HepG2 (cell line): ENCODE measurements at regions of chr2 and their contacts with region 1.

Region 1: DNA sequence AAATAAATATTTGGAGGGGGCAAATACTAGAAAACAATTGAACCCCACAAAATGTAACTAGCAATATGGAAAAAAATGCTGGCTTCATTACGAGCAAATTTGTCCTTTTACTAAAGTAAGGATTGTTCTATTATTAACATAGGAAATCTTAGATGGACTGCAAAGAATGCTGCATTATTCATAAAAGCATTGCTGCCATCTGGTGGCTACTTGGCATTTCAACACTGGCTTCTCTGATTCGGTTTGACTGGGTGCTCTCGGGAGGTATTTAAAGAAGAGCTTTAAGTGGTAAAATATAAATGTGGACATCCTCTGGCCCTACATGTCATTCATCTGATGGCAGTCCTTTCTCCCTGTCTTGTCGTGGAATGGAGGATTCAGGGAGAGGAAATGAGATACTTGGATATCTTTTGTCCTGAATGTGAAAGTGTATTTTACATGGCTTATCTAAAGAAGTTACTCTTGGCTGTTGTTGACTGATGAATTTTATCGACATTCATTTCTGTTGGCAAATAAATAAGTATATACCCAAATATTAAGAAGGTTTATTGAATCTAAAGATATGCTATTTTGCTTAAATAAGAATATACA is 130.2 kb downstream of the ARHGAP15 start:
- DNase-seq: peak; percentile 63
- ATAC-seq: peak; percentile 91
- H3K4me3 ChIP-seq: no peak overlapping the region
- H3K27ac ChIP-seq: no peak overlapping the region
- H3K4me1 ChIP-seq: no peaks in the 10 kb centered on the region
- H3K27me3 ChIP-seq: no peaks in the 10 kb centered on the region
- CTCF ChIP-seq: peak; percentile 78
- EP300 ChIP-seq: no peak
- POLR2A ChIP-seq: no peak
- RAD21 ChIP-seq: peak; percentile 40

Region 2: DNA sequence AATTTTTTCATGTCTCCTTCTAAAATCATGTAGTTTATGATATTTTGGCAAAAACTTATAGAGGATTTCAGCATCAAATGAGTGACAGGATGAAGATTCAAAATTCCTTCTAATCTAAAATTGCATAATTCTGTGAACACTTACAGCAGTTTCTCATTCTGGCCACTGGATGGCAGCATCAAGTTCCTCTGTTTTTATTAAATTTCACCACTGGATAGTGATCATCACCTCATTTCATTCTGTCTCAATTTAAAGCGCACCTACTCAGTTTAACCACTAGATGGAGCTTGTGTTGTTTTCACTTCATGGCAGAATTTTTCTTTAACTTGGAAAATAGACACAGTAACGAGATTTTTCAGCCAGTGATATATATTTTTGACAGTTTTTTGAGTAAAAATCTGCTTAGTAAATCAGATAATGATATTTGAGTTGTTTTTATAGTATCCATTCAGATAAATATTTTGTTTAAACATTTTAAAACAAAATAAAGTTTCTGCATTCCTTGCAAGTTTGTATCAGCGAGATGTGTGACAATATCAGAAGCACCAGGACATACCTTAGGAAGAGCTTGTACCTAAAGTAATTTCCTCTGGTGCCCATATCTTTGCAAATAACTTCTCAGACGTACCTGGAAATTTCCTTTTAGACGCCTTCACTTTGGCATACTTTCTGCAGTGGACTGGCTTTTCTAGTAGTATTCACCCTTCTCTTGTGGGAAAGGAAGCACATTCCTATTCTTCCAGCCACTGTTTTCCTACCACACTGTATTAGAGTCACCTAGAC is 225.0 kb before region 1 on chr2:
- CTCF ChIA-PET with region 1: interaction called, 8 read pairs
- POLR2A ChIA-PET with region 1: no interaction called
- in situ Hi-C with region 1: no loop called
- intact Hi-C with region 1: loop called (anchors 1 kb)
- DNase-seq: peak; percentile 90
- ATAC-seq: peak; percentile 84
- H3K4me3 ChIP-seq: no peak overlapping the region
- H3K27ac ChIP-seq: no peak overlapping the region
- H3K4me1 ChIP-seq: no peaks in the 10 kb centered on the region
- H3K27me3 ChIP-seq: no peaks in the 10 kb centered on the region
- CTCF ChIP-seq: peak; percentile 83
- EP300 ChIP-seq: no peak
- POLR2A ChIP-seq: no peak
- RAD21 ChIP-seq: peak; percentile 57; the same call in 1 of the 2 replicates

Region 3: GRCh38 chr2:143110758-143111428 is 148.6 kb before region 1 on chr2:
- CTCF ChIA-PET with region 1: interaction called, 23 read pairs
- POLR2A ChIA-PET with region 1: no interaction called
- in situ Hi-C with region 1: loop called (anchors 5 kb)
- intact Hi-C with region 1: loop called (anchors 1 kb)
- DNase-seq: peak; percentile 68
- ATAC-seq: peak; percentile 90
- H3K4me3 ChIP-seq: no peak overlapping the region
- H3K27ac ChIP-seq: no peak overlapping the region
- H3K4me1 ChIP-seq: no peaks in the 10 kb centered on the region
- H3K27me3 ChIP-seq: no peaks in the 10 kb centered on the region
- CTCF ChIP-seq: peak; percentile 87
- EP300 ChIP-seq: no peak
- POLR2A ChIP-seq: no peak
- RAD21 ChIP-seq: no peak; the same call in 1 of the 2 replicates

Region 4: GRCh38 chr2:143162123-143162837 is 97.2 kb before region 1 on chr2:
- CTCF ChIA-PET with region 1: interaction called, 17 read pairs
- POLR2A ChIA-PET with region 1: no interaction called
- in situ Hi-C with region 1: loop called (anchors 5 kb)
- intact Hi-C with region 1: loop called (anchors 1 kb)
- DNase-seq: peak; percentile 49
- ATAC-seq: peak; percentile 100
- H3K4me3 ChIP-seq: no peak overlapping the region
- H3K27ac ChIP-seq: no peak overlapping the region
- H3K4me1 ChIP-seq: no peaks in the 10 kb centered on the region
- H3K27me3 ChIP-seq: no peaks in the 10 kb centered on the region; a peak in 2 of 5 replicates
- CTCF ChIP-seq: peak; percentile 86
- EP300 ChIP-seq: no peak
- POLR2A ChIP-seq: no peak
- RAD21 ChIP-seq: peak; percentile 51; the same call in 1 of the 2 replicates

Region 5: DNA sequence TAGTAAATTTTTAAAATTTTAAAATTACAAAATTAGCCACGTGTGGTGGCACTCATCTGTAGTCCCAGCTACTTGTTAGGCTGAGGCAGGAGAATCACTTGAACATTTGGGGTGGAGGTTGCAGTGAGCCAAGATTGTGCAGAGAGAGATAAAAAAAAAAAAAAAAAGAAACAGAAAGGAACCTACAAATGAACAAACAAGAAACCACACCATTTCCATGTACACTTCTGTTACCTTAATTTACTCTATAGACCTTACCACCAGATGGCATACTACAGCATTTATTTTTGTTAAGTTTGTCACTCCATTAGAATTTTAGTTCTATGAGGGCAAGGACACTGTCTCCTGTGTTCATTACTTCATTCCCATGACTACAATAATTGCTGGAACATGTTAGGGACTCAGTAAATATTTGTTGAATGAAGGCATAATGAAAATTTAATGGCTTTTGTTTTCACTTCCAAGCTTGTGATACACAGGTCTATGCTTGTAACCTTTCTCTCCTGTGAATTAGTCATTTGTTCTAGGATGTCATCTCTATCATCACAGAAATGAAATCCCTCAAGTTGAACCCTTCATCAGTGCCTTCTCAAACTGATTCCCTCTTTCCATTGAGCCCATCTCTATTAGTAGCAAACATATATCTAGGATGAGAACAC is 54.2 kb before region 1 on chr2:
- CTCF ChIA-PET with region 1: interaction called, 3 read pairs
- POLR2A ChIA-PET with region 1: no interaction called
- in situ Hi-C with region 1: no loop called
- intact Hi-C with region 1: loop called (anchors 1 kb)
- DNase-seq: peak; percentile 23
- ATAC-seq: peak; percentile 49
- H3K4me3 ChIP-seq: no peak overlapping the region
- H3K27ac ChIP-seq: no peak overlapping the region
- H3K4me1 ChIP-seq: no peaks in the 10 kb centered on the region
- H3K27me3 ChIP-seq: no peaks in the 10 kb centered on the region
- CTCF ChIP-seq: peak; percentile 36
- EP300 ChIP-seq: no peak
- POLR2A ChIP-seq: no peak
- RAD21 ChIP-seq: no peak